CD4-positive, alpha-beta T cell (primary cell): ENCODE measurements at regions of chr11 and their contacts with region 1.

Region 1: DNA sequence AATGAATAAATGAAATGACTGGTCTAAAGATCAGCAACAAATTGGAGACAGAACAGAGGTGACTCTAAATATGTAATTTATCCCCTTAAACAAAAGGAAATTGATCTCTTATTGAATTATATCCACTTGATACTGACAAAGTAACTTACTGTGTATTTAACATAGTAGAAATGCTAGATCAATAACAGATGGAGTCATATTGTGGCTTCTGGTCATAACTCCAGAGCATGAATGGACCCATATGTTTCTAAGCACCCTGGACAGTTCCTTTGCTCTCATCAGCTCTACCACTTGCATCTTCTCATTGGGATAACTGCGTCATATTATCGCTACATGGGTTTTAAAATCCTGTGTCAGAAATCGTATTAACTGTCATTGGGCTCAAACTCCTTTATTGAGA is 222.3 kb downstream of the ETS1 start:
- DNase-seq: peak in 2 of 14 experiments; percentile 63 to 66
- ATAC-seq: peak; percentile 43
- H3K4me3 ChIP-seq: no peak overlapping the region
- H3K4me3 Mint-ChIP-seq: no peak overlapping the region
- H3K27ac ChIP-seq: no peak overlapping the region
- H3K27ac Mint-ChIP-seq: no peak overlapping the region
- H3K4me1 ChIP-seq: peaks cover 7% of the 10 kb centered on the region
- H3K4me1 Mint-ChIP-seq: peaks cover 43% of the 10 kb centered on the region
- H3K27me3 ChIP-seq: no peaks in the 10 kb centered on the region
- H3K27me3 Mint-ChIP-seq: no peaks in the 10 kb centered on the region
- CTCF ChIP-seq: no peak

Region 2: GRCh38 chr11:128180446-128181087 is 184.5 kb before region 1 on chr11:
- CTCF ChIA-PET with region 1: no interaction called
- POLR2A ChIA-PET with region 1: no interaction called
- intact Hi-C with region 1: loop called in 1 of 2 experiments (anchors 10 kb)
- DNase-seq: peak in 1 of 14 experiments; percentile 10
- ATAC-seq: no peak
- H3K4me3 ChIP-seq: no peak overlapping the region
- H3K4me3 Mint-ChIP-seq: no peak overlapping the region
- H3K27ac ChIP-seq: no peak overlapping the region
- H3K27ac Mint-ChIP-seq: no peak overlapping the region
- H3K4me1 ChIP-seq: no peaks in the 10 kb centered on the region
- H3K4me1 Mint-ChIP-seq: no peaks in the 10 kb centered on the region
- H3K27me3 ChIP-seq: no peaks in the 10 kb centered on the region
- H3K27me3 Mint-ChIP-seq: no peaks in the 10 kb centered on the region
- CTCF ChIP-seq: no peak

Region 3: DNA sequence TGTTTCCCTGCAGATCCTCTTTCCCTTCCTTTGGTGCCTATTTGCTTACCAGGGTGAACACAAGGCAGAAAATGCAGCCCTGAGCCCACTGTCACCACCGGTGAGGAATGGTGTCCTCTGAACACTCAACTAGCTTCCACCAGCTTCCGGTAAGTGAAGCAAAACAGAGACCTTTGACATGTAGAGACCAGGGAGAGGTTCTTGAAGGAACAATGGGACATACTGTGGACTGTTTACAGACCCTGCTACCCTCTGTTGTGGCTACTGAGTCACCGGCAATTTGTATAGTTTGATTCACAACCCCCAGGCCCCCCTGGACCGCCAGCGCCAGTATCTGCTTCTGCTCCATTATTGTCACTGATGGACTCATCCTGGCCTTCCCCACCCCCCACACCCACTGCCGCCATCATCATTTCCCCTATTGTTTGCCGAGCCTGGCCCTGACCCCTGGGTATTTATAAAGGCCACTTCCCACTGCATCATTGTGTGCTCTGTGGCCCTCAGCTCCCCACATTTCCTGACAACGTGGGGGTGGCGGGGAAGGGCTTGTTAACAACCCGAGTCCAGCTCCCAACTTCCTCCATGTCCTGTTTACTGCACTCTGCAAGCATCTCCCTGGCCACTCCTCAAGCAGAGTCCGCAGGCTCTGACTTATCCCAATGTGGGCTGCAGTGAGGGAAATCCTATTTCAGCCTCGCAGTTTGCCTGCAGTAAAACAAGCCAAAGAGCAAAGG is 30.6 kb before region 1 on chr11:
- CTCF ChIA-PET with region 1: no interaction called
- POLR2A ChIA-PET with region 1: no interaction called
- intact Hi-C with region 1: loop called in 1 of 2 experiments (anchors 2 kb)
- DNase-seq: no peak
- ATAC-seq: no peak
- H3K4me3 ChIP-seq: no peak overlapping the region
- H3K4me3 Mint-ChIP-seq: no peak overlapping the region
- H3K27ac ChIP-seq: no peak overlapping the region
- H3K27ac Mint-ChIP-seq: no peak overlapping the region
- H3K4me1 ChIP-seq: peaks cover 33% of the 10 kb centered on the region
- H3K4me1 Mint-ChIP-seq: peaks cover 82% of the 10 kb centered on the region
- H3K27me3 ChIP-seq: no peaks in the 10 kb centered on the region
- H3K27me3 Mint-ChIP-seq: no peaks in the 10 kb centered on the region
- CTCF ChIP-seq: no peak

Region 4: GRCh38 chr11:128349650-128350299 is 15.3 kb before region 1 on chr11:
- CTCF ChIA-PET with region 1: interaction called, 3 read pairs
- POLR2A ChIA-PET with region 1: interaction called, 11 read pairs
- intact Hi-C with region 1: no loop called
- DNase-seq: peak in 4 of 14 experiments; percentile 40 to 50 (median 46)
- ATAC-seq: peak; percentile 63
- H3K4me3 ChIP-seq: peak overlapping the region; percentile 8
- H3K4me3 Mint-ChIP-seq: peak overlapping the region; percentile 78
- H3K27ac ChIP-seq: no peak overlapping the region
- H3K27ac Mint-ChIP-seq: peak overlapping the region; percentile 82
- H3K4me1 ChIP-seq: peaks cover 36% of the 10 kb centered on the region
- H3K4me1 Mint-ChIP-seq: peaks cover 88% of the 10 kb centered on the region
- H3K27me3 ChIP-seq: no peaks in the 10 kb centered on the region
- H3K27me3 Mint-ChIP-seq: no peaks in the 10 kb centered on the region
- CTCF ChIP-seq: no peak